CD4-positive, alpha-beta memory T cell (primary cell): ENCODE measurements at regions of chr1 and their contacts with region 1.

Region 1: GRCh38 chr1:31335007-31335406 is 37.9 kb downstream of the FABP3 start:
- DNase-seq: peak in 4 of 5 donors; percentile 3 to 20 (median 7)
- H3K4me3 ChIP-seq: no peak overlapping the region
- H3K4me3 Mint-ChIP-seq: no peak overlapping the region
- H3K27ac ChIP-seq: no peak overlapping the region
- H3K27ac Mint-ChIP-seq: no peak overlapping the region
- H3K4me1 ChIP-seq: no peaks in the 10 kb centered on the region
- H3K4me1 Mint-ChIP-seq: peaks cover 0 to 4% (median 2%) of the 10 kb centered on the region in 4 donors
- H3K27me3 ChIP-seq: no peaks in the 10 kb centered on the region
- H3K27me3 Mint-ChIP-seq: no peaks in the 10 kb centered on the region

Region 2: DNA sequence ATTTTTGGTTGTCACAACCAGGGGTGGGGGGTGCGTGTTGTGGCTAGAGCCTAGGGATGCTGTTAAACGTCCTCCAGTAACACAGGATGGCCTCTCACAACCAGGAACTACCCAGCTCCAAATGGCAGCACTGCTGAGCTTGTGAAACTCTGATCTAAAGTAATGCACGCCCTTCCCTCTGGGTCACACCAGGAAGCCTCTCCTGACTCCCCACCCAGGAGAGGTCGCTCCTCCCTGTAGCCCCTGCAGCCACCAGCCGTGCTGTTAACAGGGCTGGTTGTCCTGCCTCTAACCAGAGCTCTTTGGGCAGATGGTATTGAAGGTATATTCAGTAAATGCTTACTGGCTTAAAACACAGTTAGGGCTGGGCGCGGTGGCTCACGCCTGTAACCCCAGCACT is 168.5 kb before region 1 on chr1:
- CTCF ChIA-PET with region 1: no interaction called
- POLR2A ChIA-PET with region 1: no interaction called
- intact Hi-C with region 1: loop called (anchors 1 kb)
- DNase-seq: no peak
- H3K4me3 ChIP-seq: no peak overlapping the region
- H3K4me3 Mint-ChIP-seq: no peak overlapping the region
- H3K27ac ChIP-seq: no peak overlapping the region
- H3K27ac Mint-ChIP-seq: no peak overlapping the region
- H3K4me1 ChIP-seq: peaks cover 4% of the 10 kb centered on the region
- H3K4me1 Mint-ChIP-seq: peaks cover 0 to 11% (median 2%) of the 10 kb centered on the region in 4 donors
- H3K27me3 ChIP-seq: no peaks in the 10 kb centered on the region
- H3K27me3 Mint-ChIP-seq: peaks cover 4 to 7% of the 10 kb centered on the region in 2 donors

Region 3: DNA sequence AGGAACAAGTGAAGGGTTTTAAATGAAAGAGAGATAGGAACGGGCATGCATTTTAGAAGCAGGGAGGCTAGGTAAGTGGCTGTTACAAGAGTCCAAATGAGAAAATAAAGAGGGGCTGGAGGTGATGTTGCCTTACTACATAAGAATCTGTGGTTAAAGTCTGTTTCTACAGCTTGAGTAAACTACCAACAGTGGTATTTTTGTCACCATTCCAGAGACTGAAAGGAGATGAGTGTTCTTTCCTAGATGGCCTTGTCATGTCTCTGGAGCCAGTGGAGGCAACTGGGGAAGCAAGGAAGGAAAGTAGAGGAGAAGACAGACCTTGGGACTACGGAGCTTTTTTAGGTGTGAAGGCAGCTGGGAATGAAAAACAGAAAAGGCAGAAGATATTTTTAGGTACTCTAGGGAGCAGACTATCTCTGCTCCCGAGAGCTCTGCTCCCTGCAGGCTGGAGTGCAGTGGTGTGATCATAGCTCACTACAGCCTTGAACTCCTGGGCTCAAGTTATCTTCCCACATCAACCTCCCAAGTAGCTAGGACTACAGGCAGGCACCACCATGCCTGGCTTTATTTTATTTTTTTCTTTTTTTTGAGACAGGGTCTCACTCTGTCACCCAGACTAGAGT is 969.1 kb after region 1 on chr1:
- CTCF ChIA-PET with region 1: no interaction called
- POLR2A ChIA-PET with region 1: no interaction called
- intact Hi-C with region 1: no loop called
- DNase-seq: no peak
- H3K4me3 ChIP-seq: no peak overlapping the region
- H3K4me3 Mint-ChIP-seq: peak overlapping the region in 3 of 8 donors; percentile 7 to 26 (median 17)
- H3K27ac ChIP-seq: no peak overlapping the region
- H3K27ac Mint-ChIP-seq: peak overlapping the region in 5 of 7 donors; percentile 2 to 83 (median 27)
- H3K4me1 ChIP-seq: peaks cover 46% of the 10 kb centered on the region
- H3K4me1 Mint-ChIP-seq: peaks cover 36 to 70% (median 51%) of the 10 kb centered on the region in 4 donors
- H3K27me3 ChIP-seq: no peaks in the 10 kb centered on the region
- H3K27me3 Mint-ChIP-seq: no peaks in the 10 kb centered on the region